Naive thymus-derived CD4-positive, alpha-beta T cell (primary cell): ENCODE measurements at regions of chr19 and their contacts with region 1.

Region 1: GRCh38 chr19:17470068-17470841 is at the start of gene SLC27A1:
- DNase-seq: peak; percentile 76 to 90 (median 84)
- ATAC-seq: peak; percentile 84
- H3K4me3 ChIP-seq: peak within 1 kb of the TSS; percentile 96
- H3K4me3 Mint-ChIP-seq: peak within 1 kb of the TSS; percentile 92 to 100 (median 96)
- H3K27ac ChIP-seq: peak within 1 kb of the TSS; percentile 77
- H3K27ac Mint-ChIP-seq: peak within 1 kb of the TSS; percentile 74 to 98 (median 93)
- H3K4me1 ChIP-seq: peaks cover 6 to 22% of the 10 kb centered on the region in 2 donors
- H3K4me1 Mint-ChIP-seq: peaks cover 22 to 38% (median 30%) of the 10 kb centered on the region in 7 donors
- H3K27me3 ChIP-seq: no peaks in the 10 kb centered on the region
- H3K27me3 Mint-ChIP-seq: peaks cover 0 to 22% (median 0%) of the 10 kb centered on the region in 5 donors
- total RNA-seq, gene SLC27A1: 3.1 to 15.1 (median 11.0) TPM

Region 2: DNA sequence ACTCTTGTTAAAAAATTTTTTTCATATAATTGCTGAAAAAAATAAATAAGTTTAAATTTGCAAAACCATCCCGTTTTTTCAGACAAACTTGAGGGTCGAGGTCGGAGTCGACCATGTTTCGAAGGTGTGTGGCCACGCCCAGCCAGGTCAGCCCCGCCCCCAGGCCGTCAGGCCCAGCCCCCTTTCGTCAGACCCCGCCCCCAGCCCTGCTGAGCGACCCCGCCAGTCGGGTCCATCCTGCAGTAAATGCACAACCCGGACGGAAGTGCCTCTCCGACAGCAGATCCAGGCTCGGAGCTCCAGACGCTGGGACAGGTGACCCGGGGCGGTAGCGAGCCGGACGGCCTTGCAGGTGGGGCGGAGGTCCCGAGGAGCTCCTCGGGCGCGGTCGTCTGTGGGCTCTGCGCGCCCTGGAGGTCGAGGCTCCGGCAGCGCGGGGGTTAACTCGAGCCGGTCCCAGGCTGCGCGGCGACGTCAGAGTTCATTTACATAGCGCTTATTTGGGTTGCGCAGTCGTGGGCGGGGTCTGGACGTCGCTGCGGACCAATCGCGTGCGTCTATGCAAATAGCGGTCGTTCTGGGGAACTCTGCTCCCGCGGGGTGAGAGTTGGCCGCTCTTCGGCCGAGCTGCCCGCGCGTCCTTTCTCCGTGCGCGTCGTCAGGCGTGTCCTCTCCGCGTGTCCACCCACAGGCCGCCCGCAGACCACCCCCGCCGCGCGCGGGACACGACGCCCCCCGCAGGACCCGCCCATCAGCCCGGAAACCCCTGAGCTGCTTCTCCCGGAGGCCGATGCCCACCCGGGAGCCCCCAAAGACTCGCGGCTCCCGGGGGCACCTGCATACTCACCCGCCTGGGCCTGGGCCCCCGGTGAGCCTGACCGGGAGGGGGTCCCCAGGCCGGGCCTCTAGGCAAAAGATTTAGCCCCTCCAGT is 244.0 kb before region 1 on chr19 and contains the start of gene OCEL1:
- CTCF ChIA-PET with region 1: no interaction called
- POLR2A ChIA-PET with region 1: interaction called, 3 read pairs
- intact Hi-C with region 1: loop called in 1 of 2 experiments (anchors 1 kb)
- DNase-seq: peak; percentile 91 to 98 (median 97)
- ATAC-seq: peak; percentile 94
- H3K4me3 ChIP-seq: peak within 1 kb of the TSS; percentile 98
- H3K4me3 Mint-ChIP-seq: peak within 1 kb of the TSS; percentile 82 to 98 (median 94)
- H3K27ac ChIP-seq: peak within 1 kb of the TSS; percentile 81
- H3K27ac Mint-ChIP-seq: peak within 1 kb of the TSS; percentile 86 to 99 (median 97)
- H3K4me1 ChIP-seq: peaks cover 0 to 2% of the 10 kb centered on the region in 2 donors
- H3K4me1 Mint-ChIP-seq: peaks cover 3 to 8% (median 5%) of the 10 kb centered on the region in 7 donors
- H3K27me3 ChIP-seq: no peaks in the 10 kb centered on the region
- H3K27me3 Mint-ChIP-seq: no peaks in the 10 kb centered on the region
- total RNA-seq, gene OCEL1: 21.8 to 32.8 (median 29.8) TPM

Region 3: DNA sequence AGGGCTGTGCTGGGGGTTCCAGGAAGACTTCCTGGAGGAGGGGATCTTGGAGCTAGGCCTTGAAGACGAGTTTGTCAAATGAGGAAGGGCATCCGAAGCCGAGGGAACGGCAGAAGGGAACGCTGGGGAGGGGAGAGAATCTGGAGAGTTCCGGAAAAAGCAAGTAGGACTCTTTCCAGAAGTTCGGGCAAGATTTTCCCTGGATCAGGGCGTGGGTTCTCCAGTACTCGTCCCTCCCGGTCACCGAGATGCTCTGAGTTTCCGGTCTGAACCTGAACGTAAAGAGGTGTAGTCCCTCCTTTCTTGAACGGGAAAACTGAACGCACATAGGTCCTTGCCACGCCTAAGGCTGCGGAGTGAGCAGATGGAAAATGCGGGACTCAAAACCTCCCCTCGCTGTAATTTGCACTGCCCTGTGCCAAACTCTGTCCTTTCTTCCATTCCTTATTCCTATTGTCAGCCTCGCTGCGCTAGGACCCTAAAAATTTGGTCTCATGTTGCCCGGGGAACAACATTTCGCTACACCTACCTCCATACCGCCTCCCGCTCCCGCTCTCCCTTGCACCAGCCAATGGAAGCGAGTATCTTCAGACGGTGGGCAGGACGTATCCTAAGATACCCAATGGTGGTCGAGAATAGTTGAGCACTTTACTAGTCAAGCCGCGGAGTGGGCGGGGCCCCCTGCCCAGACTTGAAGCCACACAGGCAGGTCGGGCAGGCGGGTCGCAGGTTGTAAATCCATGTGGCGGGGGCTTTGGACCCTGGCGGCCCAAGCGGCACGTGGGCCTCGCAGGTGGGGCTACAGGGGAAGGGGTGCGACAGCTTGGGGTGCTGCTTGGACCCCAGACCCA is 133.2 kb before region 1 on chr19 and contains the start of gene GTPBP3:
- CTCF ChIA-PET with region 1: no interaction called
- POLR2A ChIA-PET with region 1: no interaction called
- intact Hi-C with region 1: loop called in 1 of 2 experiments (anchors 1 kb)
- DNase-seq: peak; percentile 84 to 99 (median 95)
- ATAC-seq: peak; percentile 96
- H3K4me3 ChIP-seq: peak within 1 kb of the TSS; percentile 76
- H3K4me3 Mint-ChIP-seq: peak within 1 kb of the TSS; percentile 86 to 96 (median 92)
- H3K27ac ChIP-seq: peak within 1 kb of the TSS; percentile 79
- H3K27ac Mint-ChIP-seq: peak within 1 kb of the TSS; percentile 78 to 95 (median 93)
- H3K4me1 ChIP-seq: peaks cover 16 to 22% of the 10 kb centered on the region in 2 donors
- H3K4me1 Mint-ChIP-seq: peaks cover 22 to 55% (median 27%) of the 10 kb centered on the region in 7 donors
- H3K27me3 ChIP-seq: no peaks in the 10 kb centered on the region
- H3K27me3 Mint-ChIP-seq: no peaks in the 10 kb centered on the region
- total RNA-seq, gene GTPBP3: 29.6 to 59.8 (median 40.4) TPM

Region 4: GRCh38 chr19:17405250-17406038 is 64.8 kb before region 1 on chr19 and contains the start of gene BST2:
- CTCF ChIA-PET with region 1: interaction called, 4 read pairs
- POLR2A ChIA-PET with region 1: interaction called, 4 read pairs
- intact Hi-C with region 1: loop called in 1 of 2 experiments (anchors 1 kb)
- DNase-seq: peak in 6 of 9 donors; percentile 20 to 69 (median 50)
- ATAC-seq: peak; percentile 90
- H3K4me3 ChIP-seq: peak within 1 kb of the TSS; percentile 81
- H3K4me3 Mint-ChIP-seq: peak within 1 kb of the TSS; percentile 80 to 98 (median 95)
- H3K27ac ChIP-seq: peak within 1 kb of the TSS; percentile 83
- H3K27ac Mint-ChIP-seq: peak within 1 kb of the TSS; percentile 81 to 98 (median 88)
- H3K4me1 ChIP-seq: peaks cover 0 to 12% of the 10 kb centered on the region in 2 donors
- H3K4me1 Mint-ChIP-seq: peaks cover 20 to 47% (median 35%) of the 10 kb centered on the region in 7 donors
- H3K27me3 ChIP-seq: no peaks in the 10 kb centered on the region
- H3K27me3 Mint-ChIP-seq: peaks cover 0 to 2% (median 0%) of the 10 kb centered on the region in 5 donors
- total RNA-seq, gene BST2: 29.9 to 221 (median 57.1) TPM

Region 5: DNA sequence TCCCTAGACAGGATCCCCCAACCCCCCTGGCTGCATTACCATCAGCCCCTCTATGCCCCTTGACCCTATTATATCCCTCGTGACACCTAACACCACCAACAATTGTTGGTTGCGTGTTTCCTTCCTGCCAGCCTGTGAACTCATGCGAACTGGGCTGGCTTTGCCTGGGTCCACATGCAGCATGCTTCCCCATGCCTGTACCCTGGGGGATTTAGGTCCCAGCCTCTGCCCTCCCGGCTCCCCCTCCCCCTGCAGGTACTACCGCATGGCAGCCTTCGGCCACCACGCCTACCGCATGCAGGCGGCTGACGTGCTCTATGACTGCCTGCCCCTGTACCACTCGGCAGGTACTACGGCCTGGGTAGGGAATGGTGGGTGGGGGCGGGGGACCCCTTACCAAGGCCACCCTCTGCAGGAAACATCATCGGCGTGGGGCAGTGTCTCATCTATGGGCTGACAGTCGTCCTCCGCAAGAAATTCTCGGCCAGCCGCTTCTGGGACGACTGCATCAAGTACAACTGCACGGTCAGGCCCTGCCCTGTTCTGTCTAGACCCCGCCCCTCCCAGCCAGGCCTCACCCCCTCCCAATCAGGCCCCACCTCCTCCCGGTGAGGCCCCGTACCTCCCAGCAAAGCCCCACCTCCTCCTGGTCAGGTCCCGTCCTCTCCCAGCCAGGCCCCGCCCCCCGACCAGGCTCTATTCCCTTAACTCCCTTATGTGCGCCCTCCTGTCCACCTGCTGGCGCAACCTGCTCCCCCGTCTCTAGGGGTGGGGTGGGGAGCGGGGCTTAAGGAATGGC is 18.5 kb after region 1 on chr19:
- CTCF ChIA-PET with region 1: no interaction called
- POLR2A ChIA-PET with region 1: interaction called, 3 read pairs
- intact Hi-C with region 1: loop called in 1 of 2 experiments (anchors 1 kb)
- DNase-seq: peak in 8 of 9 donors; percentile 26 to 71 (median 58)
- ATAC-seq: peak; percentile 91
- H3K4me3 ChIP-seq: peak overlapping the region; percentile 50
- H3K4me3 Mint-ChIP-seq: peak overlapping the region; percentile 11 to 81 (median 76)
- H3K27ac ChIP-seq: peak overlapping the region; percentile 66
- H3K27ac Mint-ChIP-seq: peak overlapping the region; percentile 42 to 96 (median 85)
- H3K4me1 ChIP-seq: peaks cover 26 to 39% of the 10 kb centered on the region in 2 donors
- H3K4me1 Mint-ChIP-seq: peaks cover 18 to 51% (median 38%) of the 10 kb centered on the region in 7 donors
- H3K27me3 ChIP-seq: no peaks in the 10 kb centered on the region
- H3K27me3 Mint-ChIP-seq: no peaks in the 10 kb centered on the region

Region 6: GRCh38 chr19:17582613-17583012 is 112.4 kb after region 1 on chr19:
- CTCF ChIA-PET with region 1: no interaction called
- POLR2A ChIA-PET with region 1: no interaction called
- intact Hi-C with region 1: no loop called
- DNase-seq: no peak
- ATAC-seq: no peak
- H3K4me3 ChIP-seq: no peak overlapping the region
- H3K4me3 Mint-ChIP-seq: no peak overlapping the region
- H3K27ac ChIP-seq: no peak overlapping the region
- H3K27ac Mint-ChIP-seq: peak overlapping the region in 1 of 9 donors; percentile 38
- H3K4me1 ChIP-seq: no peaks in the 10 kb centered on the region
- H3K4me1 Mint-ChIP-seq: peaks cover 0 to 9% (median 0%) of the 10 kb centered on the region in 7 donors
- H3K27me3 ChIP-seq: no peaks in the 10 kb centered on the region
- H3K27me3 Mint-ChIP-seq: no peaks in the 10 kb centered on the region

Region 7: DNA sequence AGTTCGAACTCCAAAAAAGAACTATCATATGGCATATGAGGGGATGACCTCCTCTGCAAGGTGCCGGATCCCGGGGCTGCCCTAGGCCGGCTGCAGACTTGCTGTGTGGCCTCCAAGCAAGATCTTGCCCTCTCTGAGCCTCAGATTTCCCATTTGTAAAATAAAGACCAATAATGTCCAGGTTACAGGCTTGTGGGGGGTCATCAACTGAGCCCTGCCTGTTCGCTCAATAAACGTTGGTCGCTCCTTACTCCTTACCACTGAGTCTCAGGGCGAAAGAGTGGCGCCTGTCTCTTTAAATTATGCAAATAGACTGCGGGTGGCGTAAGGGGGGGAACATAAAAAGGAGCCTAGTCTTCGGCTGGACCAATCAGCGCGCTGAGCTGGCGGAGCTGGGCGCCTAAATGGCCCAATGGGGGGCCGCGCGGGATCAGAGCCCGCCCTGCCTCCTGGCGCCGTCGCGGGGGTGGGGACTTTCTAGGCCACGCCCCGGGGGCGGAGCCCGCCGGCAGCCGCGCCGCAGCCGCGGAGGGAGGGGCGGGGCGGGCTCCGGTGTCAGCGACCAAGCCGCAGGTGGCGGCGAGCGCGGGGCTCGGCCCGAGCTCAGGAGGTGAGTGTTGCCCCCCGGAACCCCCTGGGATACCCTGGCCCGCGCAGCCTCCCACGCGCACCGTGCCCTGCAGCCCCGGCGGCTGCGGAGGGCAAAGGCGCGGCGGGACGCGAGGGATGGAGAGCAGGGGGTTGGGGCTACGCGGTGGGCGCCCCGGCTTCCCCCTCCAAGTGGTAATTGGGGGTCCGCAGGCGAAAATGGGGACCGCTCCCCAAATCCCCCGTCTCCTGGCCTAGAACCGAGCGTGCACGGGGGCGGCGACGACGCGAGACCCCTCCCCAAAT is 277.2 kb after region 1 on chr19:
- CTCF ChIA-PET with region 1: no interaction called
- POLR2A ChIA-PET with region 1: no interaction called
- intact Hi-C with region 1: loop called in 1 of 2 experiments (anchors 1 kb)
- DNase-seq: peak; percentile 90 to 99 (median 95)
- ATAC-seq: peak; percentile 96
- H3K4me3 ChIP-seq: peak overlapping the region; percentile 59
- H3K4me3 Mint-ChIP-seq: peak overlapping the region; percentile 87 to 100 (median 94)
- H3K27ac ChIP-seq: peak overlapping the region; percentile 73
- H3K27ac Mint-ChIP-seq: peak overlapping the region; percentile 14 to 88 (median 72)
- H3K4me1 ChIP-seq: peaks cover 31 to 37% of the 10 kb centered on the region in 2 donors
- H3K4me1 Mint-ChIP-seq: peaks cover 35 to 49% (median 39%) of the 10 kb centered on the region in 7 donors
- H3K27me3 ChIP-seq: no peaks in the 10 kb centered on the region
- H3K27me3 Mint-ChIP-seq: no peaks in the 10 kb centered on the region